Left lung (tissue), 14 donors: ENCODE measurements at regions of chr11 and their contacts with region 1.

Region 1: GRCh38 chr11:8566613-8567210 is 27.3 kb downstream of the STK33 start:
- DNase-seq: peak in 2 of 4 donors; percentile 28 to 52
- ATAC-seq: peak; percentile 74
- H3K4me3 ChIP-seq: no peak overlapping the region
- H3K27ac ChIP-seq: no peak overlapping the region
- H3K4me1 ChIP-seq: no peaks in the 10 kb centered on the region
- H3K27me3 ChIP-seq: no peaks in the 10 kb centered on the region
- CTCF ChIP-seq: peak; percentile 50 to 66

Region 2: GRCh38 chr11:8225589-8226036 is 341.1 kb before region 1 on chr11:
- intact Hi-C with region 1: loop called in 1 of 2 experiments (anchors 10 kb)
- DNase-seq: peak in 3 of 4 donors; percentile 57 to 83 (median 69)
- ATAC-seq: peak; percentile 71
- H3K4me3 ChIP-seq: no peak overlapping the region
- H3K27ac ChIP-seq: no peak overlapping the region
- H3K4me1 ChIP-seq: peaks cover 0 to 5% of the 10 kb centered on the region in 2 donors
- H3K27me3 ChIP-seq: no peaks in the 10 kb centered on the region
- CTCF ChIP-seq: peak; percentile 83 to 97

Region 3: DNA sequence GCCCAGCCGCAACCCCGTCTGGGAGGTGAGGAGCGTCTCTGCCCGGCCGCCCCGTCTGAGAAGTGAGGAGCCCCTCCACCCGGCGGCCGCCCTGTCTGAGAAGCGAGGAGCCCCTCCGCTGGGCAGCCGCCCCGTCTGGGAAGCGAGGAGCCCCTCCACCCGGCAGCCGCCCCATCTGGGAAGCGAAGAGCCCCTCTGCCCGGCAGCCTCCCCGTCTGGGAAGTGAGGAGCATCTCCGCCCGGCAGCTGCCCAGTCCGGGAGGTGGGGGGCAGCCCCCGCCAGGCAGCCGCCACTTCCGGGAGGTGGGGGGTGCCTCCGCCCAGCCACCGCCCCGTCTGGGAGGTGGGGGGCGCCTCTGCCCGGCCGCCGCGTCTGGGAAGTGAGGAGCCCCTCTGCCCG is 43.3 kb before region 1 on chr11:
- intact Hi-C with region 1: no loop called
- DNase-seq: peak in 1 of 4 donors; percentile 73
- ATAC-seq: no peak
- H3K4me3 ChIP-seq: no peak overlapping the region
- H3K27ac ChIP-seq: no peak overlapping the region
- H3K4me1 ChIP-seq: no peaks in the 10 kb centered on the region
- H3K27me3 ChIP-seq: no peaks in the 10 kb centered on the region
- CTCF ChIP-seq: no peak